HCT116 (cell line): ENCODE measurements at regions of chr3 and their contacts with region 1.

Region 1: GRCh38 chr3:138113326-138113725 is 2.1 kb downstream of the DZIP1L start:
- DNase-seq: peak; percentile 3
- ATAC-seq: no peak
- H3K4me3 ChIP-seq: no peak overlapping the region
- H3K27ac ChIP-seq: no peak overlapping the region
- H3K4me1 ChIP-seq: peaks cover 13 to 33% of the 10 kb centered on the region in 2 experiments
- H3K27me3 ChIP-seq: no peaks in the 10 kb centered on the region
- CTCF ChIP-seq: 0 out of 6 replicates have a peak, but pooled peaks of 1 of the 3 experiments have one; percentile 18
- POLR2A ChIP-seq: no peak
- RAD21 ChIP-seq: no peak

Region 2: DNA sequence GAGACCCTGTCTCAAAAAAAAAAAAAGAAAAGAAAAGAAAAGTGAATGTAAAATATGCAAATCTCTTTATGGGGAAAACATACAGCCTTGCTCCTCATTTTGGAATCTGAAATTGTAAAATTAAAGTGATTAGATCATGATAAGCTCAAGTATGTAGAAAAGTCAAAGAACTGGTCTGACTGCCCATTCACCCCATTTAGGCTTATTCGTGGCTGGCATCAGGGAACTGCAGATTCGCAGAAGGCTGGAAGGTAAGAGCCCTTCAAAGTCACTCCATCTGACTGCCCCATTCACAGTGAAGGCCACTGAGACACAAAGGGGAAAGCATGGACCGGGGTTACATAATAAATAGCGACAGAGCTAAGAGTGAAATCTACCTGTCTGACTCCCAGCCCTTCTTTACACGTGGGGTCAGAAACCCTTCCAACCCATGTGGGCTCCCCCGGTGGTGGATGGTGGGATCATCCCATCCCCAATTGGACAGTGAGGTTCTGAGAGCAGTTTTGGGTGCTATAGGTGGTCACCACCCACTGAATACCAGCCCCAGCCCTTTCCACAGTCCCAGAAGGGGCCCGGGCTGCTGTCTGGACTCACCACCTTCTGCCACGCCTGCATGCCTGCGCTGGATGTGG is 16.0 kb before region 1 on chr3:
- CTCF ChIA-PET with region 1: interaction called, 10 read pairs
- POLR2A ChIA-PET with region 1: no interaction called
- RAD21 ChIA-PET with region 1: no interaction called
- intact Hi-C with region 1: no loop called
- DNase-seq: no peak
- ATAC-seq: peak; percentile 98
- H3K4me3 ChIP-seq: no peak overlapping the region
- H3K27ac ChIP-seq: no peak overlapping the region
- H3K4me1 ChIP-seq: peaks cover 0 to 4% of the 10 kb centered on the region in 2 experiments; a peak in 1 of 4 replicates
- H3K27me3 ChIP-seq: no peaks in the 10 kb centered on the region
- CTCF ChIP-seq: peak in 2 of 3 experiments; percentile 66 to 80; a peak in 4 of 6 replicates
- POLR2A ChIP-seq: no peak
- RAD21 ChIP-seq: no peak